Psoas muscle (tissue), 8 donors: ENCODE measurements at regions of chr3 and their contacts with region 1.

Region 1: GRCh38 chr3:154275965-154276364 is 48.3 kb downstream of the DHX36 start:
- DNase-seq: no peak
- ATAC-seq: no peak
- H3K4me3 ChIP-seq: no peak overlapping the region
- H3K27ac ChIP-seq: no peak overlapping the region
- H3K4me1 ChIP-seq: no peaks in the 10 kb centered on the region
- H3K27me3 ChIP-seq: no peaks in the 10 kb centered on the region
- CTCF ChIP-seq: no peak

Region 2: DNA sequence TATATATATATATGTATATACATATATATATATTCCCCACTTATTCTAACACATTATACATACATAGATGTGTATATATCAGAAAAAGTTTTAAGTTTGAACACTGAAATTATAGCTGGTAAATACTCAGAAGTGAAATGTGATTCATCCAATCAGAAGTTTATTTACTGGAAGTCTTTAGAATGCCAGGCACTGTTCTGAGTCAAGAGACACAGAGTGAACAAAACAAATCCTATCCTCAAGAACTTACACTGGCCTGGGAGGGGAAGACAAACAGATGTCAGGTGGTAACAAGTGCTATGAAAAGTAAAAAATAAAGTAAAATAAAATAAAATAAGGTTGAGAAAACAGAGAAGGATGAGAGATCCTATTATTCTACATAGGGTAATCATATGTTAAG is 34.9 kb after region 1 on chr3:
- intact Hi-C with region 1: loop called in 1 of 2 experiments (anchors 5 kb)
- DNase-seq: no peak
- ATAC-seq: peak in 1 of 4 donors; percentile 53
- H3K4me3 ChIP-seq: no peak overlapping the region
- H3K27ac ChIP-seq: no peak overlapping the region
- H3K4me1 ChIP-seq: peaks cover 14% of the 10 kb centered on the region
- H3K27me3 ChIP-seq: no peaks in the 10 kb centered on the region
- CTCF ChIP-seq: no peak

Region 3: GRCh38 chr3:154323891-154324738 is 48.1 kb after region 1 on chr3 and contains the start of gene DHX36:
- intact Hi-C with region 1: loop called in 1 of 2 experiments (anchors 5 kb)
- DNase-seq: peak; percentile 89 to 94
- ATAC-seq: peak; percentile 96 to 98 (median 96)
- H3K4me3 ChIP-seq: peak within 1 kb of the TSS; percentile 93
- H3K27ac ChIP-seq: peak within 1 kb of the TSS; percentile 86
- H3K4me1 ChIP-seq: peaks cover 30% of the 10 kb centered on the region
- H3K27me3 ChIP-seq: no peaks in the 10 kb centered on the region
- CTCF ChIP-seq: no peak
- total RNA-seq, gene DHX36: 52.4 to 117 (median 78.7) TPM

Region 4: GRCh38 chr3:155131104-155131503 is 855.1 kb after region 1 on chr3:
- intact Hi-C with region 1: no loop called
- DNase-seq: no peak
- ATAC-seq: peak in 3 of 4 donors; percentile 51 to 72 (median 71)
- H3K4me3 ChIP-seq: no peak overlapping the region
- H3K27ac ChIP-seq: no peak overlapping the region
- H3K4me1 ChIP-seq: no peaks in the 10 kb centered on the region
- H3K27me3 ChIP-seq: no peaks in the 10 kb centered on the region
- CTCF ChIP-seq: no peak